Activated CD8-positive, alpha-beta T cell treated with anti-CD3 and anti-CD28 coated beads for 36 hours (primary cell): ENCODE measurements at regions of chr1 and their contacts with region 1.

Region 1: DNA sequence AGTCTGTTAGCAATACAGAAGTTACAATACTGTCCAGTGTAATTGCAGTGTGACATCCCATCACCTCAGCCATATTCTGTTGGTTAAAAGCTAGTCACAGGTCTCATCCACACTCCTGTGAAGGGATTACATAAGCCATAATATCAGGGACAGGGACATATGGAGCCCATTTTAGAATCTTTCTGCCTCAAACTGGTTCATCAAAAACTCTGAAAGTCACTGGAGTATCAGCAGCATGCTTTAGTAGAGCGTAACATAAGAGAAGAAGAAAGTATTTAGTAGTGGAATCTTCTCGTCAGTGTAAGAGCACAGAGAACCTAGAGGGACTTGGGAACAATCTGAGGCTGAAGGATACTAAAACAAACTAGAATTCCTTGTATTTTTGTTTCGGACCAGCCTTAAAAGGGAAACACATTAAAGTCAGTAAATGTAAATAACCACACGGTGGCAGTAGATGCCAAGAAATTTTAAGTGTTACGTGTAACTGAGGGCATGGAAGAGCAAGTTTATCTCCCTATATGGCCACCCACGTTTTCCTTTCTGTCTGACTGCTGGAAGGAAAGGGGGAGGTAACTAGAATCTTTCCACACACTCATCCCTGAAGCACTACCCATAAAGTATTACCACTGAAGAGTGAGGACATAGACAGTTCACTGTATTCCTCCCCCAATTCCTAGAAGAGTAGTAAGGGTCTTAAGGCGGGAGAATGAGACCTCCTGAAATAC is 41.6 kb upstream of the AGL start:
- DNase-seq: peak; percentile 45
- ATAC-seq: peak; percentile 84
- H3K4me3 Mint-ChIP-seq: peak overlapping the region; percentile 5
- H3K27ac Mint-ChIP-seq: peak overlapping the region; percentile 58
- H3K4me1 Mint-ChIP-seq: peaks cover 18% of the 10 kb centered on the region
- H3K27me3 Mint-ChIP-seq: peaks cover 13% of the 10 kb centered on the region
- CTCF ChIP-seq: peak; percentile 77

Region 2: GRCh38 chr1:99776120-99776519 is 32.4 kb before region 1 on chr1:
- CTCF ChIA-PET with region 1: no interaction called
- POLR2A ChIA-PET with region 1: no interaction called
- intact Hi-C with region 1: no loop called
- DNase-seq: no peak
- ATAC-seq: no peak
- H3K4me3 Mint-ChIP-seq: no peak overlapping the region
- H3K27ac Mint-ChIP-seq: no peak overlapping the region
- H3K4me1 Mint-ChIP-seq: no peaks in the 10 kb centered on the region
- H3K27me3 Mint-ChIP-seq: peaks cover 13% of the 10 kb centered on the region
- CTCF ChIP-seq: no peak

Region 3: DNA sequence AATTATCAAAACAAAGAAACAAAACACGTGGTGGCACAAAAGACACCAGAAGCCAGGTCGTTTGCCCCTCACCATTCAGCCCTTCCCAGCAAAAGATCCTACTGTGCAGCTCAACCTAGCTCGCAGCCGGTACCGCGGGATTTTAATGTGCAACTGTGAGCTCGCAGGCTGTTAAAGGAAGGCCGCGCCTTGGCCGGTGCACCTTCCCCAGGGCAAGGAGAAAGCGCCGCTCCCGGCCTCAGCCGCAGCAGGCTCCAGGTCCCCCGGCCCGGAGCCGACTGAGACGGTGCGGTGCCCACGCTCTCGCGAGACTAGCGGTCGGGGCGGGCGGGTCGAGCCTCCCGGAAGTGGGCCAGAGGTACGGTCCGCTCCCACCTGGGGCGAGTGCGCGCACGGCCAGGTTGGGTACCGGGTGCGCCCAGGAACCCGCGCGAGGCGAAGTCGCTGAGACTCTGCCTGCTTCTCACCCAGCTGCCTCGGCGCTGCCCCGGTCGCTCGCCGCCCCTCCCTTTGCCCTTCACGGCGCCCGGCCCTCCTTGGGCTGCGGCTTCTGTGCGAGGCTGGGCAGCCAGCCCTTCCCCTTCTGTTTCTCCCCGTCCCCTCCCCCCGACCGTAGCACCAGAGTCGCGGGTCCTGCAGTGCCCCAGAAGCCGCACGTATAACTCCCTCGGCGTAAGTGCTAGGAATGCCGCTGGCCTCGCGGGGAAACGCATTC is 41.3 kb after region 1 on chr1 and contains the start of gene AGL:
- CTCF ChIA-PET with region 1: no interaction called
- POLR2A ChIA-PET with region 1: no interaction called
- intact Hi-C with region 1: no loop called
- DNase-seq: peak; percentile 90
- ATAC-seq: peak; percentile 98
- H3K4me3 Mint-ChIP-seq: peak within 1 kb of the TSS; percentile 95
- H3K27ac Mint-ChIP-seq: peak within 1 kb of the TSS; percentile 91
- H3K4me1 Mint-ChIP-seq: peaks cover 25% of the 10 kb centered on the region
- H3K27me3 Mint-ChIP-seq: no peaks in the 10 kb centered on the region
- CTCF ChIP-seq: no peak
- total RNA-seq, gene AGL: 14.2 to 14.5 TPM

Region 4: GRCh38 chr1:100132566-100133477 is 324.3 kb after region 1 on chr1 and contains the starts of genes SASS6 and TRMT13:
- CTCF ChIA-PET with region 1: no interaction called
- POLR2A ChIA-PET with region 1: no interaction called
- intact Hi-C with region 1: loop called (anchors 10 kb)
- DNase-seq: peak; percentile 98
- ATAC-seq: peak; percentile 95
- H3K4me3 Mint-ChIP-seq: peak within 1 kb of the TSS; percentile 89
- H3K27ac Mint-ChIP-seq: peak within 1 kb of the TSS; percentile 96
- H3K4me1 Mint-ChIP-seq: peaks cover 37% of the 10 kb centered on the region
- H3K27me3 Mint-ChIP-seq: no peaks in the 10 kb centered on the region
- CTCF ChIP-seq: no peak
- total RNA-seq, gene SASS6: 12.9 to 13.6 TPM
- total RNA-seq, gene TRMT13: 15.5 to 17.5 TPM